ENCODE measurements at regions of chr12 and their contacts with region 1.

Region 1: DNA sequence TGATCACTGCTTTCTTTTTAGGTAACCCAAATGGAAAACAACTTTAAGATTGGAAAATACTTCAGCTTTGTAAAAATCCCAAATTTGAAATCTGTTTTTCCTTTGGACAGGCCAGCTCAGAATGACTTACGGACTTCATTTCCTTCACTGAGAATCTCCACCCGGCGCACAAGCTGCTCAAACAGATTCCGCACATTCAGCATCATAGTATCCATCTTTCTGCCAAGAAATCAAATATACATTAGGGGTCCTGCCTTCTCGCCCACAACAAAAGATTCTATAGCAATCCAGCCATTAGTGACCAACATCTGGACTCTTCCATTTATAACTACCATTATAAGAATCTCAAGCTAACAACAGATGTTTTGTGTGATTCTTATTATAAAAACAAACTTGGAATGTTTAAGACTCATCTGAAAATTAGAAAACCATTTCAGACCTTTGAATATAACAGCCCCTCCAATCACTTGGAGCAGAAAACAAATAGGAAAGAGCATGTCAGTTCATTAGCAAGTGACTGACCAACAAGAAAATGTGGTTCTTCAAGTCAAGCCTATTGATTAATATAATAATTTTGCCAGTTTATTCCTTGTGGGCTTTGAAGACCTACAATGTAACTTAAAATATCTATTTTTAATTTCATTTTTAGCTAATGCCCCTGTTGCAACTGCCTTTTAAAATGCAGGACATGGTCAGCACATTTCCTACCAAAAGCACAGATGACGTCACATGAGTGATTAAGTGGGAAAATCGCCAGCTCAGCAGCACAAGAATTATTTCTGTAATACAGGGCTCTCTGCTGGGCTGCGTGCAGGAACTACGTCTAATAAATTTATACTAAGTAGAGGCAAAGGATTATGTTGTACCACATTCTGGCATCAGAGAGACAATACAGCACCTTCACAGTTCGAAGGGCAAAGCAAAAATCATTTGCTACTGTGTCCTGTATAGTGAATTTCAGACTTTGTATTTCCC is 8.5 kb downstream of the RACGAP1 start:
- DNase-seq: no peak
- H3K4me3 Mint-ChIP-seq: no peak overlapping the region
- H3K27ac Mint-ChIP-seq: no peak overlapping the region
- H3K4me1 Mint-ChIP-seq: peaks cover 39% of the 10 kb centered on the region
- H3K27me3 Mint-ChIP-seq: no peaks in the 10 kb centered on the region

Region 2: DNA sequence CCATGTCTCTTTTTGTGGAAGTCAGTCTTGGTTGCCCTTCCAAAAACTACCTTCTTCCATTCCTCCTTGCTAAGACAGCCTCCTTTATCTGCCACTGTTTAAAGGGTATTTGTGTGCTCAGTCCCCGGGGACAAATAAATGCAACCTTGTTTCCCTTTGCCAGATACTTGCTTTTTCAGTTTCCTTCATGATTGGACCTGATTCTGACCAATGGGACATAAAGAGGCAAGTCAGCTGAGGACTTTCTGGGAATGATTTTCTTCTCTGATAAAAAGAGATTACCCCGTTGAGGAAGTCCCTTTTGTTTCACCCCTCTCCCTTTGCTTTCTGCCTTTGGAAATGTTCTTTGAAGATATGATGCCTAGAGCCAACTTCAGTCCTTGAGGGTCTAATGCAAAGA is 878.2 kb before region 1 on chr12:
- CTCF ChIA-PET with region 1: no interaction called
- POLR2A ChIA-PET with region 1: interaction called, 10 read pairs
- DNase-seq: no peak
- H3K4me3 Mint-ChIP-seq: no peak overlapping the region
- H3K27ac Mint-ChIP-seq: no peak overlapping the region
- H3K4me1 Mint-ChIP-seq: peaks cover 8% of the 10 kb centered on the region
- H3K27me3 Mint-ChIP-seq: no peaks in the 10 kb centered on the region

Region 3: DNA sequence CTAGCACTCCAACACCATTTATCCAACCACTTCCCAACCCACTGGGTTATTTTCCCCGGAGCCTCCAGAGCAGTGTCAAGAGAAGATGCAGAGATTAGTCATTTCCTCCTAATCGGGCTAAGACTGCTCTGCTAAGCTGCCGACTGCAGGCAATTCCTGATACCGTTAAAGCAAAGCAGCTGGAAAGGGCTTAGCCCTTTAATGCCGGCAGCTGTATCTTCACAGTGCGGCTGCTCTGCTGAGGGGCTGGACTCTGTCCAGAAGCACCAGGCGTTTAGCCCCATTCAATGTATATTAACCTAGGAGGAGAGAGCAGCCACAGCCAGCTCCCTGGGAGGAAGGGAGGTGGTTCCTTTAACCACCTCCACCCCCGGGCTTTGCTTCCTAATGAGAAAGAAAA is 32.9 kb before region 1 on chr12:
- CTCF ChIA-PET with region 1: interaction called, 4 read pairs
- POLR2A ChIA-PET with region 1: interaction called, 12 read pairs
- DNase-seq: no peak
- H3K4me3 Mint-ChIP-seq: no peak overlapping the region
- H3K27ac Mint-ChIP-seq: no peak overlapping the region
- H3K4me1 Mint-ChIP-seq: no peaks in the 10 kb centered on the region
- H3K27me3 Mint-ChIP-seq: no peaks in the 10 kb centered on the region

Region 4: DNA sequence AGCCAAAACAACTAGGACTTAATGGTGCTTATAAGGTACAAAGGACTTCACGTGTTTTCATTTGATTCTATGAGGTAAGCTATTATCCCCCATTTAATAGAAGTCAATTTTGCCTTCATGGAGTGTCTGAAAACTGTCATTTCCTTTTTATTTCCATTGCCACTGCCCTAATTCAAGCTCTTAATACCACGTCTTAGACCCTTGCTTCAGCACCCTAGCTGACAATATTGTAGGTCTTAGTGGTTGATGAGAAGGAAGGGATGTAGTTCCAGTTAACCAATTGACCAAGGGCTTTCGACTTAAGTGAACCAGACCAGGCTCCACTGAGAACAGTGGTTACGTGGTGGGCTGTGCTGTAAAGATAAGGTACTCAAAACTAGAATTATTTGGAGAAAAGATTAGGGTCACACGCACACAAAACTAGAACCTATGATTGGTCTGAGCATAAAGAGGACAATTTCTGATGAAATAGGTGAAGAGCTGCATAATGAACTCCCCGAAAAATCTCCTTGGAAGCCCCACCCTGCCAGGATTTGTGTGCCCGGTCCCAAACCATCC is 31.0 kb after region 1 on chr12:
- CTCF ChIA-PET with region 1: no interaction called
- POLR2A ChIA-PET with region 1: no interaction called
- DNase-seq: no peak
- H3K4me3 Mint-ChIP-seq: no peak overlapping the region
- H3K27ac Mint-ChIP-seq: no peak overlapping the region
- H3K4me1 Mint-ChIP-seq: peaks cover 3% of the 10 kb centered on the region
- H3K27me3 Mint-ChIP-seq: peaks cover 32% of the 10 kb centered on the region